K562 (cell line): ENCODE measurements at regions of chr7 and their contacts with region 1.

Region 1: DNA sequence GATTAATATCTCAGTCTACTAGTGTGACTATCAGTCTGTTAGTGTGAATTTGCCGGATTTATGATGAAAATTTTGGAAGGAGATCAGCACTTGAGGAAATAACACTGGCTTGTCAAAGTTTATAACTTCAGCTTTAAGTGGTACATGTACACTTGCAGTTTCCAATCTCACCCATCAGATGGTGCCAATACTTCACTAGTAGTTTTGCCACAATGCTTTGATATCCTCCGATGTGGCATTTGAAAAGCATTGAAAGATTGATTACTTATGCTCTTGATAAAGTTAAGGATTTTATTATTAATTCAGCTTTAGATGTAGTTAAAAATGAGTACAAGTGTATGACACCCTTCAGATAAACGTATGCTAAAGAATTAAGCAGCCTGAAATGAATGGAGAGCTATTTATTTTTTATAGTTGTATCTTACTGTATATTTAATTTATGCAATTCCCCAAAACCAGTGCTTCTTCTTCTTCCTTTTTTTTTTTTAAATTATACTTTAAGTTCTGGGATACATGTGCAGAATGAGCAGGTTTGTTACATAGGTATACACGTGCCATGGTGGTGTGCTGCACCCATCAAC is 98.2 kb downstream of the ANLN start:
- DNase-seq: peak in 1 of 4 experiments; percentile 37
- ATAC-seq: peak; percentile 55; the same call in 2 of the 3 replicates
- H3K4me3 ChIP-seq: no peak overlapping the region
- H3K27ac ChIP-seq: no peak overlapping the region
- H3K4me1 ChIP-seq: no peaks in the 10 kb centered on the region
- H3K27me3 ChIP-seq: peaks cover 4 to 17% of the 10 kb centered on the region in 2 experiments; a peak in 3 of 5 replicates
- CTCF ChIP-seq: peak; percentile 54 to 73 (median 57); a peak in 5 of 6 replicates
- EP300 ChIP-seq: no peak
- POLR2A ChIP-seq: no peak
- RAD21 ChIP-seq: peak; percentile 77 to 92

Region 2: GRCh38 chr7:36670585-36671431 is 183.0 kb after region 1 on chr7:
- CTCF ChIA-PET with region 1: interaction called, 7 read pairs
- POLR2A ChIA-PET with region 1: no interaction called
- in situ Hi-C with region 1: no loop called
- intact Hi-C with region 1: loop called (anchors 2 kb)
- DNase-seq: peak; percentile 73 to 80 (median 78)
- ATAC-seq: peak; percentile 99
- H3K4me3 ChIP-seq: no peak overlapping the region
- H3K27ac ChIP-seq: no peak overlapping the region
- H3K4me1 ChIP-seq: no peaks in the 10 kb centered on the region
- H3K27me3 ChIP-seq: peaks cover 0 to 3% of the 10 kb centered on the region in 2 experiments; a peak in 4 of 5 replicates
- CTCF ChIP-seq: peak; percentile 85 to 93 (median 92)
- EP300 ChIP-seq: no peak
- POLR2A ChIP-seq: no peak
- RAD21 ChIP-seq: peak; percentile 61 to 81

Region 3: DNA sequence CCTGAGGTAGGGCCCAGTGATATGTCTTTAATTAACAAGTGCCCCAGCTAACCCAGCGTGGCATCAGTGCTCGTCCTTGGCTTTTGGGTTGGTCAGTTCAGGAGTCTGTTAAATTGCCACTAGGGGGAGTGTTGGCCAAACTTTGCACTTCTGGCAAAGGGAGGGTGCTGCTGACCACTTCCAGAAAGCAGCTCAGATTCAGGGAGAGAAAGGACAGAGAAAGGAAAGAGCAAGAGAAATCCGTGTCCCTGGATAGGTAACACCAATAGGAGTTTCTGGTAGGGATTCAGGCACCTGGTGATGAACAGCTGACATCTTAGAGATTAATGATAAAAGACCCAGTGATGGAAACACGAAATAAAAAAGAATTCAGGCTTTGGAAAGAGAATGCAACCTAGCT is 479.5 kb after region 1 on chr7:
- CTCF ChIA-PET with region 1: no interaction called
- POLR2A ChIA-PET with region 1: no interaction called
- in situ Hi-C with region 1: no loop called
- intact Hi-C with region 1: loop called (anchors 5 kb)
- DNase-seq: peak; percentile 48 to 63 (median 61)
- ATAC-seq: peak; percentile 98
- H3K4me3 ChIP-seq: no peak overlapping the region
- H3K27ac ChIP-seq: no peak overlapping the region
- H3K4me1 ChIP-seq: no peaks in the 10 kb centered on the region
- H3K27me3 ChIP-seq: no peaks in the 10 kb centered on the region
- CTCF ChIP-seq: peak; percentile 68 to 79 (median 73)
- EP300 ChIP-seq: no peak
- POLR2A ChIP-seq: no peak
- RAD21 ChIP-seq: peak; percentile 51 to 65